ENCODE measurements at regions of chr3 and their contacts with region 1.

Region 1: GRCh38 chr3:111851511-111851954 is 7.5 kb upstream of the PHLDB2 start:
- DNase-seq: no peak
- H3K4me3 ChIP-seq: no peak overlapping the region
- H3K27ac ChIP-seq: peak overlapping the region; percentile 2 to 51 (median 40)
- H3K4me1 ChIP-seq: peaks cover 11 to 33% (median 26%) of the 10 kb centered on the region in 4 donors
- H3K27me3 ChIP-seq: no peaks in the 10 kb centered on the region
- CTCF ChIP-seq: no peak
- EP300 ChIP-seq: no peak
- POLR2A ChIP-seq: no peak

Region 2: GRCh38 chr3:111033470-111034050 is 818.0 kb before region 1 on chr3:
- intact Hi-C with region 1: no loop called
- DNase-seq: no peak
- H3K4me3 ChIP-seq: no peak overlapping the region
- H3K27ac ChIP-seq: no peak overlapping the region
- H3K4me1 ChIP-seq: no peaks in the 10 kb centered on the region
- H3K27me3 ChIP-seq: no peaks in the 10 kb centered on the region
- CTCF ChIP-seq: no peak
- EP300 ChIP-seq: no peak
- POLR2A ChIP-seq: no peak

Region 3: DNA sequence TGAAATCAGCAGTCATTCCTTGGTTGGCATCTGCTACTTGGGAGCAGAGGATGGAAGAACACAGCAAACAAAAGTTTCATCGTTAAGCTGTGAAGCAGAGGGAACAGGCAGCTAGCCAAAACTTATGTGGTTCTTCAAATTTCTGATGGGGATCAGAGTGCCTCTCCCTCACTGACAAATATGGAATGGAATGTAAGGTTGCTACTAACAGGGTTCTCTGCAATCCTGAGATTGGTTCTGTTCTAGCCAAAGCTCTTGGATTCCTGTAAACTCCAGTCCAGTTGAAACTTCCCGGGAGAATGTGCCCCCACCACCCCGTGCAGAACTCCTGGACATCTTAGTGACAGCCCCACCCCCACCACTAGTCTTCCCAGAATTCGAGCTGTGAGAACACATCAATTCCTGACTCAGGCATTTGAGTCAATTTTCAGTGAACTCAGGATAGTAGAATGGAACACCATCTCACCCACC is 48.4 kb before region 1 on chr3:
- intact Hi-C with region 1: loop called (anchors 5 kb)
- DNase-seq: peak; percentile 94
- H3K4me3 ChIP-seq: no peak overlapping the region
- H3K27ac ChIP-seq: peak overlapping the region; percentile 64 to 83 (median 76)
- H3K4me1 ChIP-seq: peaks cover 28 to 40% (median 39%) of the 10 kb centered on the region in 4 donors
- H3K27me3 ChIP-seq: no peaks in the 10 kb centered on the region
- CTCF ChIP-seq: no peak
- EP300 ChIP-seq: peak; percentile 72
- POLR2A ChIP-seq: no peak

Region 4: GRCh38 chr3:112619295-112619694 is 767.8 kb after region 1 on chr3:
- intact Hi-C with region 1: no loop called
- DNase-seq: no peak
- H3K4me3 ChIP-seq: no peak overlapping the region
- H3K27ac ChIP-seq: no peak overlapping the region
- H3K4me1 ChIP-seq: peaks cover 0 to 18% (median 2%) of the 10 kb centered on the region in 4 donors
- H3K27me3 ChIP-seq: no peaks in the 10 kb centered on the region
- CTCF ChIP-seq: no peak
- EP300 ChIP-seq: no peak
- POLR2A ChIP-seq: no peak